Activated T-helper 1 cell treated with anti-CD3 and anti-CD28 coated beads, Interleukin-12 subunit alpha, Interleukin-12 subunit beta, Interleukin-2, Interleukin-4 antibody, amounts not matched to agents 30 ng/mL and 10 ng/mL and 1 ng/mL, durations not matched to agents 14 hours and 24 hours and 36 hours (primary cell): ENCODE measurements at regions of chr19 and their contacts with region 1.

Region 1: DNA sequence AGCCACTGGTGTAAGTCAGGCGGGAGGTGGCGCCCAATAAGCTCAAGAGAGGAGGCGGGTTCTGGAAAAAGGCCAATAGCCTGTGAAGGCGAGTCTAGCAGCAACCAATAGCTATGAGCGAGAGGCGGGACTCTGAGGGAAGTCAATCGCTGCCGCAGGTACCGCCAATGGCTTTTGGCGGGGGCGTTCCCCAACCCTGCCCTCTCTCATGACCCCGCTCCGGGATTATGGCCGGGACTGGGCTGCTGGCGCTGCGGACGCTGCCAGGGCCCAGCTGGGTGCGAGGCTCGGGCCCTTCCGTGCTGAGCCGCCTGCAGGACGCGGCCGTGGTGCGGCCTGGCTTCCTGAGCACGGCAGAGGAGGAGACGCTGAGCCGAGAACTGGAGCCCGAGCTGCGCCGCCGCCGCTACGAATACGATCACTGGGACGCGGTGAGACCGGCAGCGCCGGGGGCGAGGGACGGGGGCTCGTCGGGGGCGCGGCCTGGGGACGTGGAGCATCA is at the start of gene ALKBH7:
- DNase-seq: peak; percentile 95
- H3K4me3 Mint-ChIP-seq: peak within 1 kb of the TSS; percentile 81
- H3K27ac Mint-ChIP-seq: peak within 1 kb of the TSS; percentile 81
- H3K4me1 Mint-ChIP-seq: peaks cover 11% of the 10 kb centered on the region
- H3K27me3 Mint-ChIP-seq: no peaks in the 10 kb centered on the region
- total RNA-seq, gene ALKBH7: 24.8 and 27.1 TPM in 2 replicates

Region 2: GRCh38 chr19:5690125-5690954 is 682.3 kb before region 1 on chr19 and contains the start of gene RPL36:
- intact Hi-C with region 1: loop called (anchors 2 kb)
- DNase-seq: peak; percentile 98
- H3K4me3 Mint-ChIP-seq: peak within 1 kb of the TSS; percentile 99
- H3K27ac Mint-ChIP-seq: peak within 1 kb of the TSS; percentile 95
- H3K4me1 Mint-ChIP-seq: peaks cover 9% of the 10 kb centered on the region
- H3K27me3 Mint-ChIP-seq: no peaks in the 10 kb centered on the region
- total RNA-seq, gene RPL36: 1,000 and 1,001 TPM in 2 replicates

Region 3: DNA sequence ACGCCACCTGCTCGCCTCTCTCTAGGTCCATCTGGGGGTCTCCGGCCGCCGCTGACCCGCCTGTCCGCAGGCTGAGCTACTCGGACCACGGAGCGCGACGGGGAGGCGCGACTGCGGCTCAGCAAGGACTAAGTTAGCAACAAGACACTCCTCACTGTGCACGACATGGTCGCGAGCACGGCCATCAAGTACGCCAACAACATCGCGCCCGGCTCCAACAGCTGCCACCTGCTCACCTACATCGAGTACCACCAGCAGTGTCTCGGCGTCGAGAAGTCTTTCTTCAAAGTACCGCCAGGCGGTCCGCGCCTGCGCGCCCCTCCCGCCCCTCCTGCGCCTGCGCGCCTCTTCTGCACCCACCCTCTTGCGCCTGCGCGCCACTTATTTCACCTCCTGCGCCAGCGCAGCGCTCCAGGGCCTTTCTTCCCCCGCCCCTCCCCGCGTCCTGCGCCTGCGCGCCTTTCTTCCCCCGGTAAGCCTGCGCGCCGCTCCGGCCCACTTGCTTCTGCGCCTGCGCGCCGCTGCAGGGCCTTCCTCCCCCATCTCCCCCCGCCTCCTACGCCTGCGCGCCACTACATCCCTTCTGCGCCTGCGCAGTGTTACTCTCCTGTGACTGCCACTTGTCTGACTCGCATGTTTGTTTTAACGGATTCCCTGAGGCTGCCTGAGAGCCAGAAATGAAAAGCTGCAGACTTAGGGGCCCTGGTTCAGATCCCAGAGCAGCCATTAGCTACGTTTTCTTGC is 173.2 kb before region 1 on chr19:
- intact Hi-C with region 1: loop called (anchors 1 kb)
- DNase-seq: peak; percentile 99
- H3K4me3 Mint-ChIP-seq: peak overlapping the region; percentile 99
- H3K27ac Mint-ChIP-seq: peak overlapping the region; percentile 94
- H3K4me1 Mint-ChIP-seq: peaks cover 22% of the 10 kb centered on the region
- H3K27me3 Mint-ChIP-seq: peaks cover 2% of the 10 kb centered on the region

Region 4: GRCh38 chr19:6393074-6393983 is 20.7 kb after region 1 on chr19 and contains the start of gene GTF2F1:
- intact Hi-C with region 1: loop called (anchors 1 kb)
- DNase-seq: peak; percentile 87
- H3K4me3 Mint-ChIP-seq: peak within 1 kb of the TSS; percentile 98
- H3K27ac Mint-ChIP-seq: peak within 1 kb of the TSS; percentile 97
- H3K4me1 Mint-ChIP-seq: peaks cover 29% of the 10 kb centered on the region
- H3K27me3 Mint-ChIP-seq: no peaks in the 10 kb centered on the region
- total RNA-seq, gene GTF2F1: 62.9 and 65.5 TPM in 2 replicates

Region 5: GRCh38 chr19:6616011-6616410 is 243.4 kb after region 1 on chr19:
- intact Hi-C with region 1: no loop called
- DNase-seq: no peak
- H3K4me3 Mint-ChIP-seq: no peak overlapping the region
- H3K27ac Mint-ChIP-seq: peak overlapping the region; percentile 72
- H3K4me1 Mint-ChIP-seq: peaks cover 26% of the 10 kb centered on the region
- H3K27me3 Mint-ChIP-seq: peaks cover 22% of the 10 kb centered on the region

Region 6: DNA sequence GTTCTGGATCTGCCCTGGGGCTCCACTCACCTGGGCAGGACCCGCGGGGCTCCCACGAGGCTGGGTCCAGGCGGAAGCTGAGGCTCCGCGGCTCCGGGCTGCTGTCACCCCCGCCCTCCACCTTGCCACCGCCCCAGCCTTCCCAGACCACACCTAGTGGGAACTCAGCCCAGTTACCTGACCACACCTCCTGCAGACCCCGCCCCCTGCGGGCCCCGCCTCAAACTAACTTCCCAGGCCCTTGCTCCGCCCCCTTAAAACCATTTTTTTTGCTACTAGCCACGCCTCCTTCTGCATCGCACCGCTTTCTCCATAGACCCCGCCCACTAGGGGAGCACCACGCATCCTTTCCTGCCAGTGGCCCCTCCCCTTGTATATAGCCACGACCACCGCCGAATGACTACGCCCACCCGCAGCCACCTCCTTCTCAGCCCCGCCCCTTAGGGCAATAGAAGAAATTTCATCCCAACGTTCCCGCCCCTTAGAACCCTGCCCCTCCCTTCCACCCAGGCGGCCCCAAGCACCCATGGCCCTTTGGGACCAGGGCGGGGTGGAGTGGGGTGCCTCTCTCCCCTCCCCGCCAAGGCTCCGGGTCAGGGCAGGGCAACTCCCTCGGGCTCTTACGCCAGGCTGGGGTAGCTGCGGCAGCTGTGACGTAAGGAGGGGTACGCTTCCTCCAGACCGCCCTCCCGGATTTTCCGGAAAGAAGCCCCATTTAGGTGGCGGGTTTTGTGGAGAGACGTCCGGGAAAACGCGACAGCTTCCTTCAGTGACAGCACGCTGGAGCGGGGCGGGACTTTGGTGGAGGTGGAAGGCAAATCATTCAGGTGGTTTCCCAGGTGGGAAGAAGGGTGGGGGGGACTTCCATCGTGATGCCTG is 395.0 kb after region 1 on chr19 and contains the start of gene SH2D3A:
- intact Hi-C with region 1: loop called (anchors 2 kb)
- DNase-seq: peak; percentile 93
- H3K4me3 Mint-ChIP-seq: peak within 1 kb of the TSS; percentile 88
- H3K27ac Mint-ChIP-seq: peak within 1 kb of the TSS; percentile 89
- H3K4me1 Mint-ChIP-seq: peaks cover 53% of the 10 kb centered on the region
- H3K27me3 Mint-ChIP-seq: no peaks in the 10 kb centered on the region
- total RNA-seq, gene SH2D3A: 15.0 and 15.6 TPM in 2 replicates